ENCODE measurements at regions of chr10 and their contacts with region 1.

Region 1: DNA sequence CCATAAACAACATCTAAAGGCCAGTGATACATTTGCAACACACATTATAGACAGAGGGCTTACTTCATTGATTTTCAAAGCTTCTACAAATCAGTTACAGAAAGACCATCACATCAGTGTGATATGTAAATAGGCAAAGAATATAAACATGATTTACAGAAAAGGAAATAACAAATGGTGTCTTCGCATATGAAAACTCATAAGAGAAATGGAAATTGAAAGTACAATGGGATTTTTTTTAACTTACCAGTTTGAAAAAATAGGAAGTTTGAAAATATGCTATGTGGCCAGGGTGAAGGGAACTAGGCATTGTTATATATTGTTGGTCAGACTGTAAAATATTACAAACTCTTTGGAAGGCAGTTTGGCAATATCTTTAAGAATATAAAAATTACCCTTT is 27.3 kb downstream of the SEC23IP start:
- DNase-seq: no peak
- ATAC-seq: no peak
- H3K4me3 ChIP-seq: no peak overlapping the region
- H3K27ac ChIP-seq: peak overlapping the region in 1 of 10 donors; percentile 71
- H3K4me1 ChIP-seq: peaks cover 0 to 14% (median 0%) of the 10 kb centered on the region in 9 donors
- H3K27me3 ChIP-seq: no peaks in the 10 kb centered on the region
- CTCF ChIP-seq: no peak

Region 2: DNA sequence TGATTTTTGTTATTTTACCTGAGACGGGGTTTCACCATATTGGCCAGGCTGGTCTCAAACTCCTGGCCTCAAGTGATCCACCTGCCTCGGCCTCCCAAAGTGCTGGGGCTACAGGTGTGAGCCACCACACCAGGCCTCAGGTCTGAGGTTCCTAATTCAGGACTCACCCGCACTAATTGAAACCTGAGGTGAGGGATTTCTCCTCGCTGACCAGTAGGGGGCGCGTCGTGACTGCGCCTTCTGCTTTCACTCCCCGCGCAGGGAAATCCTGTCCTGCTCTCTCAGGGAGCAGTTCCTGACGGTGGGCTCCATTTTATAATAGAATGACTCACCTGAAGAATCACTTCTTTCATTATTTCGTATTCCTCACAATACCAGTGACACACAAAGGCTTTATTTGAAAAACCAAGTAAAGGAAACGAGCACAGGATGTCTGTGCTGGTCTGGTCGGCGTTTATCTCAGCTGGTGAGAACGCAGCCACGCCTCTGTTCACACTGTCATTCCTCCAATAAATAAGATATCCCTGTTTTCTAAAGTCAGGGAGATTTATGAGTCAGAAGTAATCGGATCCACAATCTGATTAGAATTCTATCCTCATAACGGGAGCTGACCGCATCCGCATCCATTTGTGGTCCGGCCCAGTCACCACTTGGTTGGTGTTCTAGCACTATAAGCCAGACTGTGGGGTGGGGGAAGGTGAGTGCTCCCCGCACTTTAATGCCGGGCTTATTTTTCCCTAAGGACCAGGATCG is 233.2 kb before region 1 on chr10:
- intact Hi-C with region 1: loop called in 1 of 10 experiments (anchors 5 kb)
- DNase-seq: peak; percentile 78 to 85
- ATAC-seq: peak; percentile 83 to 93 (median 89)
- H3K4me3 ChIP-seq: peak overlapping the region in 7 of 10 donors; percentile 10 to 51 (median 42)
- H3K27ac ChIP-seq: peak overlapping the region in 8 of 10 donors; percentile 3 to 72 (median 49)
- H3K4me1 ChIP-seq: peaks cover 0 to 26% (median 9%) of the 10 kb centered on the region in 9 donors
- H3K27me3 ChIP-seq: no peaks in the 10 kb centered on the region
- CTCF ChIP-seq: peak; percentile 91 to 97 (median 95)

Region 3: GRCh38 chr10:119817991-119818888 is 101.6 kb before region 1 on chr10:
- intact Hi-C with region 1: no loop called
- DNase-seq: peak; percentile 35 to 68
- ATAC-seq: peak; percentile 48 to 82 (median 74)
- H3K4me3 ChIP-seq: peak overlapping the region in 7 of 10 donors; percentile 8 to 37 (median 33)
- H3K27ac ChIP-seq: no peak overlapping the region
- H3K4me1 ChIP-seq: peaks cover 0 to 9% (median 0%) of the 10 kb centered on the region in 9 donors
- H3K27me3 ChIP-seq: no peaks in the 10 kb centered on the region
- CTCF ChIP-seq: no peak

Region 4: DNA sequence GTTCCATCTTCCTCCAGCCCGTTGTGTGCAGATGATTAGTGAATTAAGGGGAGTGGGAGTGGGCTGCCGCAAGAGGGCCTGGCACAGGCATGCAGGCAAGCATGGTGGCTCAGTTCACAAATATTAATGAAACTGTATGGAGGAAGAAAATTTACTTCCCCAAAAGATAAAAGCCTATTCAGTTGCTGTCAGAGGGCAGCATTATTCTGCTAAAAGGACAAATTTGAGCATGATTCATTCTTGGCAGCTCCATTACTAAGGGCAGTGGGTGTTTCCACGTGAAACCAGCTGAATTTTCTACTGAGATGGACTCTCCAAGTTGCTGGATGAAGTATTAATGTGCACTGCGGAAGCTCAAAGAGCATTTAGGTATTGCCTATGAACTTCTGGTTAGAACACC is 840.4 kb after region 1 on chr10:
- intact Hi-C with region 1: no loop called
- DNase-seq: no peak
- ATAC-seq: no peak
- H3K4me3 ChIP-seq: no peak overlapping the region
- H3K27ac ChIP-seq: peak overlapping the region in 1 of 10 donors; percentile 50
- H3K4me1 ChIP-seq: peaks cover 0 to 4% (median 0%) of the 10 kb centered on the region in 9 donors
- H3K27me3 ChIP-seq: peaks cover 0 to 22% (median 0%) of the 10 kb centered on the region in 7 donors
- CTCF ChIP-seq: no peak

Measured in heart right ventricle (tissue), 16 donors.